Activated CD8-positive, alpha-beta memory T cell treated with anti-CD3 and anti-CD28 coated beads, Interleukin-2, amount 10 ng/mL, durations not matched to agents 7 days and 5 days (primary cell): ENCODE measurements at regions of chr9 and their contacts with region 1.

Region 1: DNA sequence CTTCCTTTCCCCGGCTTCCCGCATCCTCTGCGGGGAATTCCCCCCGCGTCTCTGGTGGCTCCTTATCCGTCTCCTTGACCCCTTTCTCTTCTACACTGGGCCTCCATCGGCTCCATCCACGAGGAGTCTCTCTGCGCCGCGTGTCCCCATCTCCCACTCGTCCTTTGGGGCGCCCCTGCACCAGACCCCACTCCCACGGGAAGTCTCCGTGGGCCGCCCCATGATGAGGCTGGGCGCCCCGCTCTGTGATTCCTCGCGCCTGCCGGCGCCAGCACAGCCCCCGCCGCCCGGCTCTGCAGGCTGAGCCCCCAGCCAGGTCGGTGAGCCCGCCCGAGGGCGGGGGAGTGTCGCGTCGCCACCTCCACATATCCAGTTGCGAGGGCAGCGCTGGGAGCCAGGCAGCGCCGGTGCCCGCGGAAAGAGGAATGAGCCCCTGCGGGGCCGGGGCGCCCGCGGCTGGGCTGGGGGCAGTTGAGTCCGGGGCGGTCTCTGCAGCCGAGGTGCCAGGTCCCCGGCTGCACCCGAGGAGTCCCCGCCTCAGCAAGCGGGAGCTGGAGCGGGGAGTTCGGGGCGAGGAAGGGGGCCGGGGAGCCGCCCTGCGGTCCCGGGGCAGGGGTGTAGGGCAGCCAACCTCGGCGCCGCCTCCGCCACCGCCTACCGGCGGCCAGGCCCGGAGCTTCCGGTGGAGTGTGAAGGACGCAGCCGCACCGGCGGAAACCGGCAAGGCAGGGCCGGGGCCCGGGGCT is 2.1 kb upstream of the TRAF1 start:
- DNase-seq: peak; percentile 87
- ATAC-seq: peak; percentile 45
- H3K4me3 Mint-ChIP-seq: peak overlapping the region; percentile 92
- H3K27ac Mint-ChIP-seq: peak overlapping the region; percentile 100
- H3K4me1 Mint-ChIP-seq: peaks cover 77% of the 10 kb centered on the region
- H3K27me3 Mint-ChIP-seq: no peaks in the 10 kb centered on the region

Region 2: GRCh38 chr9:120856700-120857099 is 72.0 kb before region 1 on chr9:
- CTCF ChIA-PET with region 1: no interaction called
- DNase-seq: no peak
- ATAC-seq: no peak
- H3K4me3 Mint-ChIP-seq: no peak overlapping the region
- H3K27ac Mint-ChIP-seq: no peak overlapping the region
- H3K4me1 Mint-ChIP-seq: no peaks in the 10 kb centered on the region
- H3K27me3 Mint-ChIP-seq: no peaks in the 10 kb centered on the region

Region 3: DNA sequence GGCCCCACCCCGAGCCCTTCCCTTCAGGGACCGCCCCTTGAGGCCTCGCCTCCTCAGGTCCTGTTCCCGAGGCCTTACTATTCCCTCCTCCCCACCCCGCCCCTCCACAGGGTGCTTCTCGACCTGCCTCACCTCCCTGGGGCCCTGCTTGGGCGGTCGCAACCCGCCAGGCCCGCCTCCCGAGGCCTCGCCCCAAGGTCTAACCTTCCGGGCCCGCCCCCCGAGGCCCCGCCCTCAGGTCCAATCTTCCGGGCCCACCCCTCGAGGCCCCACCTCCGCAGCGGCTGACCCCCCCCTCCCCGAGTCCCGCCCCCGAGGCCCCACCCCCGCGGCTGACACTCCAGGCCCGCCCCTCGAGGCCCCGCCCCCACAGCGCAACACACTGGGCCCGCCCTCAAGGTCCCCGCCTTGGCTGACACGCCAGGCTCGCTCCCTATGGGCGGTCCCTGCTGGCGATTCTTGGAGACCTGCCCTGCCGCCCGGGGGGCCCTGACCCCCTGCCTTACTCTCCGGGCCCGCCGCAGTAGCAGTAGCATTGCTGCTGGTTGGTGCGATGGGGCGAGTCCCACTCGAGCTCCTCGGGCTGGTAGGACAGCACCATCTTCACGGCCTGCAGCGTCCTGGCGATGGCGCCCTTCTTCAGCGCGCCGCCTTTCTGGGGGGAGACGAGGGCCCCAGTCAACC is 59.8 kb before region 1 on chr9:
- CTCF ChIA-PET with region 1: interaction called, 18 read pairs
- DNase-seq: peak; percentile 97
- ATAC-seq: peak; percentile 92
- H3K4me3 Mint-ChIP-seq: peak overlapping the region; percentile 79
- H3K27ac Mint-ChIP-seq: peak overlapping the region; percentile 98
- H3K4me1 Mint-ChIP-seq: peaks cover 43% of the 10 kb centered on the region
- H3K27me3 Mint-ChIP-seq: no peaks in the 10 kb centered on the region

Region 4: DNA sequence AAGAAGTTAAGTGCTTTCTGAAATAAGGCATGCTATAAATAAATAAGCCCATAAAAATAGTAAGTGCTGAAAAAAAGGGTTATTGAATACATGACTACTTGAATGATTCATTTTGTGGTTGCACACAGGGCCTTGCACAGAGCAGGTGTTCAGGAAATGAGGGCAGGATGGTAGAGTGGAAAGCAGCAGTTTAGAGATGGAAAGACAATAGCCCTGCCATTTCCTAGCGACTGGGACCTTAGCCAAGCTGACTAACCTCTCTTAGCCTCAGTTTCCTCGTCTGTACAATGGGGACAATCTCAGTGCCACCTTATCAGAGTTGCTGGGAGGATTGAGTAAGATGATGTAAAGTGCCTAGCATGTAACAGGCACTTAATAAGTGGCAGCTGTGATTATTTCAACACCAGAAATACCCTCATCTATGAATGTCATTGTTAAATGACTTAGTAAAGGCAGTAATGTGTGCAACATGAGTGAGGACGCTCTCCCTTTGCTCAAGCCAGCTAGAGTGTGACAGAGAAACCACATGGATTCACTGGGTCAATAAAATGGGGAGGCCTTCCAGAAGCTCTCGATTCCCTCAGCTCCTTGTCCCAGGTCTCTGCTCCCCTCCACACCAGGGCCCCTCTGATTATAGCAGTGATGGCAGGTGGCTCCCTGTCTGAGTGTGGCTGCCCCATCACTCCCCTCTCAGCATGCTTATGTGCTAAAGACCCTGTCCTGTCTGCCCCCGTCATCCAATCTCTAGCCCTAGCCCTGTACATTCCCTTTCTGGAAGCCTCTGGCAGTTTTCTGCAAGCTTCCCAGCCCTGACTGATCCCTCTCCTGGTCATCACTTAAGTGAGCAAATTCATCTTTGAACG is 35.7 kb before region 1 on chr9:
- CTCF ChIA-PET with region 1: interaction called, 18 read pairs
- DNase-seq: peak; percentile 87
- ATAC-seq: peak; percentile 68
- H3K4me3 Mint-ChIP-seq: peak overlapping the region; percentile 56
- H3K27ac Mint-ChIP-seq: peak overlapping the region; percentile 96
- H3K4me1 Mint-ChIP-seq: peaks cover 80% of the 10 kb centered on the region
- H3K27me3 Mint-ChIP-seq: no peaks in the 10 kb centered on the region

Region 5: DNA sequence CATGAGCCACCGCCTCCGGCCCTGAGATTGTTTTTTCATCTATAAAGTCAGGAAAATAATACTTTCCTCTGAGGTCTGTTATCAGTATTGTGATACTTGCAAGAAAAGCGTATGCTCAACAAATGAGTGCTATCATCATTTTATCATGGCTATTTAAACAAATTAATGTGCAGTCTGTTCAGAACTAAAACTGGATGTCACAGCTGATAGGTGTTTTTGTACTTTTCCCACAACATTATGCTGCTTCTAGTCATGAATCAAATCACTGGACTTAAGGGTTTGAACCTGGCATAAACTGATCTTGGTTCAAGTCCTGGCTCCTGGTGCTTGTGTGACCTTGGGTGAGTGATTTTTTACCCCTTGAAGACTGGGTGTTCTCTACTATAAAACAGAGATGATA is 30.3 kb before region 1 on chr9:
- CTCF ChIA-PET with region 1: interaction called, 18 read pairs
- DNase-seq: no peak
- ATAC-seq: no peak
- H3K4me3 Mint-ChIP-seq: no peak overlapping the region
- H3K27ac Mint-ChIP-seq: peak overlapping the region; percentile 57
- H3K4me1 Mint-ChIP-seq: peaks cover 72% of the 10 kb centered on the region
- H3K27me3 Mint-ChIP-seq: no peaks in the 10 kb centered on the region

Region 6: GRCh38 chr9:120916588-120916987 is 12.1 kb before region 1 on chr9:
- CTCF ChIA-PET with region 1: interaction called, 22 read pairs
- DNase-seq: no peak
- ATAC-seq: no peak
- H3K4me3 Mint-ChIP-seq: peak overlapping the region; percentile 37
- H3K27ac Mint-ChIP-seq: peak overlapping the region; percentile 79
- H3K4me1 Mint-ChIP-seq: peaks cover 84% of the 10 kb centered on the region
- H3K27me3 Mint-ChIP-seq: no peaks in the 10 kb centered on the region